ENCODE measurements at regions of chr19 and their contacts with region 1.

Region 1: GRCh38 chr19:1747285-1748114 is 5.8 kb upstream of the ONECUT3 start:
- DNase-seq: peak; percentile 99
- H3K4me3 ChIP-seq: peak overlapping the region; percentile 47 to 55 (median 52)
- H3K27ac ChIP-seq: peak overlapping the region; percentile 87
- H3K4me1 ChIP-seq: peaks cover 37% of the 10 kb centered on the region
- H3K27me3 ChIP-seq: peaks cover 15% of the 10 kb centered on the region
- CTCF ChIP-seq: no peak

Region 2: GRCh38 chr19:1690699-1691307 is 56.7 kb before region 1 on chr19:
- CTCF ChIA-PET with region 1: no interaction called
- dilution Hi-C with region 1: no loop called
- in situ Hi-C with region 1: no loop called
- intact Hi-C with region 1: loop called (anchors 5 kb)
- DNase-seq: peak; percentile 28
- H3K4me3 ChIP-seq: peak overlapping the region in 1 of 3 experiments; percentile 5
- H3K27ac ChIP-seq: no peak overlapping the region
- H3K4me1 ChIP-seq: peaks cover 15% of the 10 kb centered on the region
- H3K27me3 ChIP-seq: peaks cover 3% of the 10 kb centered on the region
- CTCF ChIP-seq: no peak

Region 3: DNA sequence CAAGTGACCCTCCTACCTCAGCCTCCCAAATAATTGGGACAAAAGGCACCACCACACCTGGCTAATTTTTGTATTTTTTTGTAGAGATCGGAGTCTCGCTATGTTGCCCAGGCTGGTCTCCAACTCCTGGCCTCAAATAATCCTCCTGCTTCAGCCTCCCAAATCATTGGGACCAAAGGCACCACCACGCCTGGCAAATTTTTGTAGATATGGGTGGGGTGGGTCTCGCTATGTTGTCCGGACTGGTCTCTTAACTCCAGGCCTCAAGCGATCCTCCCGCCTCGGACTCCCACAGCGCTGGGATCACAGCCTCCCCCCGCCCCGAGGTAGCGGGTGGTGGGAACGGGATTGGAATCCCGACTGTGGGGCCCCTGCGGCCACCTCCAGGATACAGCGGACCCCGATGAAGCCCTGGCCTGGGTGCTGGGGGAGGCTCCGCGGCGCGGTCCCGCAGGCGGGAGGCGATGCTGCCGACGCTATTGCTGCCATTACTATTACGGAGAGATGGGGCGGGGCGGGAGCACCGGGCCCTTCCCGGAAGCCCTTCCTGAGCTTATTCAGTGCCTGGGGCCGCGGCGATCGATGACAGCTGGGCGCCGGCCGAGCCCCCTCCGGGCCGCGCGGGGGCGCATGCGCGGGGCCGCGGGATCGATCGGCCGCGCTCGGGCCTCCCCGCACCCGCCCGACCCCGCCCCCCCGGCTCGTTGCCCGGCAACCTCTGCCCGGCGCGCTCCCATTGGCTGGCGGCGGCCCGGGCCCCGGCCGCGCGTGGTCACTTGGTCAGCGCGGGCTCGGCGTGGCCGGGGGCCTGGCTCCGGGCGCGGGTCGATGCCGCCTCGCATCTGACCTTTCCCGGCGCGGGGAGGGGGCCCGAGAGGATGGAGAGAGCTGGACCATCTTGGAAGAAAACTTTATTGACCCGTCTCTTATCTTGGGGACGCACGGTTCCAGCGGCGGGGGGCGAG is 22.1 kb before region 1 on chr19:
- CTCF ChIA-PET with region 1: no interaction called
- dilution Hi-C with region 1: no loop called
- in situ Hi-C with region 1: no loop called
- intact Hi-C with region 1: loop called (anchors 1 kb)
- DNase-seq: peak; percentile 27
- H3K4me3 ChIP-seq: peak overlapping the region; percentile 49 to 63 (median 55)
- H3K27ac ChIP-seq: no peak overlapping the region
- H3K4me1 ChIP-seq: peaks cover 12% of the 10 kb centered on the region
- H3K27me3 ChIP-seq: peaks cover 2% of the 10 kb centered on the region
- CTCF ChIP-seq: peak in 1 of 2 donors; percentile 2

Region 4: GRCh38 chr19:1907563-1908363 is 160.3 kb after region 1 on chr19:
- CTCF ChIA-PET with region 1: no interaction called
- dilution Hi-C with region 1: no loop called
- in situ Hi-C with region 1: no loop called
- intact Hi-C with region 1: no loop called
- DNase-seq: peak; percentile 49
- H3K4me3 ChIP-seq: peak overlapping the region in 2 of 3 experiments; percentile 27 to 40
- H3K27ac ChIP-seq: no peak overlapping the region
- H3K4me1 ChIP-seq: peaks cover 40% of the 10 kb centered on the region
- H3K27me3 ChIP-seq: no peaks in the 10 kb centered on the region
- CTCF ChIP-seq: no peak

Measured in mammary epithelial cell (primary cell).